ENCODE measurements at regions of chr15 and their contacts with region 1.

Region 1: DNA sequence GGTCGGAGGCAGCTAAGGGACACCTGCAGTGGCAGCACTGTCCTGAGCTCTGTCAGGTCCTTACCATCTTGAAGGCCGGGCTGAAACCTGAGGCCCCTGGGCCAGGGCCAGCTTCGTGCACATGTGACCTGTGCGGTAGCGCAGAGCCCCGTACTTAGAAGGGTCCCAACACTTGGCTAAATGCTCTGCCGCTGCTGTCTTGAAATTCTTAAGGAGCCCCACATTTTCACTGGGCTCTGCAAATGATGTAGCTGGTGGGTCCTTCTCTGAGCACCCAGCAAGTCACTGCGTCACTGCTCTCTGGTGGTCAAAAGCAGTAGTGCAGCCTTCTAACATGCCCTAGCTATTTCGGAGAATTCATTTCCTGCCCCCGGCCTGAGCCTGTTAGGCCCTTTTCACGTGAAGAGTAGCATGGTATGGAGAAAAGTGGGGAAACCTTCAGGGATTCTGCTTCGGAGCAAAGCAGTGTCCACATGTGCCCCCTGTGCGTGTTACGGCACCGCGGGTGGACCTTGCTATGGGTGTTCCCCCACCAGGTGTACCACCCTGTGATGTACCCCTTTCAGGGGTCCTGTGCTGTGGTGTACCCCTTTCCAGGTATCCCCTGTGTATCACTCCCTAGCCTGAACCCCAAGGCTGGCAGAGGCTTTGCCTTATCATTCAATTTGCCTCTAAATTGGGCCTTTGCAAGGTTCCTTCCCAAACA is 79.7 kb downstream of the TMEM266 start:
- DNase-seq: peak; percentile 40 to 71 (median 47)
- H3K4me3 ChIP-seq: no peak overlapping the region
- H3K4me3 Mint-ChIP-seq: no peak overlapping the region
- H3K27ac ChIP-seq: no peak overlapping the region
- H3K27ac Mint-ChIP-seq: no peak overlapping the region
- H3K4me1 ChIP-seq: peaks cover 4% of the 10 kb centered on the region
- H3K4me1 Mint-ChIP-seq: peaks cover 0 to 1% (median 0%) of the 10 kb centered on the region in 3 donors
- H3K27me3 ChIP-seq: peaks cover 11% of the 10 kb centered on the region
- H3K27me3 Mint-ChIP-seq: peaks cover 9 to 49% of the 10 kb centered on the region in 2 donors

Region 2: GRCh38 chr15:75809986-75810750 is 329.4 kb before region 1 on chr15:
- CTCF ChIA-PET with region 1: interaction called, 13 read pairs
- POLR2A ChIA-PET with region 1: no interaction called
- DNase-seq: no peak
- H3K4me3 ChIP-seq: no peak overlapping the region
- H3K4me3 Mint-ChIP-seq: no peak overlapping the region
- H3K27ac ChIP-seq: no peak overlapping the region
- H3K27ac Mint-ChIP-seq: peak overlapping the region in 3 of 8 donors; percentile 30 to 43 (median 36)
- H3K4me1 ChIP-seq: no peaks in the 10 kb centered on the region
- H3K4me1 Mint-ChIP-seq: no peaks in the 10 kb centered on the region
- H3K27me3 ChIP-seq: no peaks in the 10 kb centered on the region
- H3K27me3 Mint-ChIP-seq: peaks cover 4 to 12% of the 10 kb centered on the region in 2 donors

Region 3: GRCh38 chr15:75994220-75994619 is 145.3 kb before region 1 on chr15:
- CTCF ChIA-PET with region 1: no interaction called
- POLR2A ChIA-PET with region 1: no interaction called
- DNase-seq: no peak
- H3K4me3 ChIP-seq: no peak overlapping the region
- H3K4me3 Mint-ChIP-seq: no peak overlapping the region
- H3K27ac ChIP-seq: no peak overlapping the region
- H3K27ac Mint-ChIP-seq: no peak overlapping the region
- H3K4me1 ChIP-seq: no peaks in the 10 kb centered on the region
- H3K4me1 Mint-ChIP-seq: no peaks in the 10 kb centered on the region
- H3K27me3 ChIP-seq: no peaks in the 10 kb centered on the region
- H3K27me3 Mint-ChIP-seq: peaks cover 13 to 39% of the 10 kb centered on the region in 2 donors

Region 4: GRCh38 chr15:76057332-76058000 is 82.1 kb before region 1 on chr15:
- CTCF ChIA-PET with region 1: interaction called, 21 read pairs
- POLR2A ChIA-PET with region 1: no interaction called
- DNase-seq: peak in 3 of 5 donors; percentile 12 to 30 (median 13)
- H3K4me3 ChIP-seq: no peak overlapping the region
- H3K4me3 Mint-ChIP-seq: peak overlapping the region in 4 of 7 donors; percentile 40 to 59 (median 45)
- H3K27ac ChIP-seq: no peak overlapping the region
- H3K27ac Mint-ChIP-seq: no peak overlapping the region
- H3K4me1 ChIP-seq: peaks cover 19% of the 10 kb centered on the region
- H3K4me1 Mint-ChIP-seq: peaks cover 17 to 29% (median 27%) of the 10 kb centered on the region in 3 donors
- H3K27me3 ChIP-seq: peaks cover 23% of the 10 kb centered on the region
- H3K27me3 Mint-ChIP-seq: peaks cover 50 to 68% of the 10 kb centered on the region in 2 donors

Region 5: GRCh38 chr15:76150971-76151598 is 11.6 kb after region 1 on chr15:
- CTCF ChIA-PET with region 1: interaction called, 34 read pairs
- POLR2A ChIA-PET with region 1: no interaction called
- DNase-seq: peak; percentile 35 to 69 (median 49)
- H3K4me3 ChIP-seq: no peak overlapping the region
- H3K4me3 Mint-ChIP-seq: no peak overlapping the region
- H3K27ac ChIP-seq: no peak overlapping the region
- H3K27ac Mint-ChIP-seq: peak overlapping the region in 2 of 8 donors; percentile 3 to 70
- H3K4me1 ChIP-seq: peaks cover 4% of the 10 kb centered on the region
- H3K4me1 Mint-ChIP-seq: peaks cover 4 to 16% (median 13%) of the 10 kb centered on the region in 3 donors
- H3K27me3 ChIP-seq: no peaks in the 10 kb centered on the region
- H3K27me3 Mint-ChIP-seq: peaks cover 10 to 11% of the 10 kb centered on the region in 2 donors